Posterior vena cava (tissue), 2 donors: ENCODE measurements at regions of chr4 and their contacts with region 1.

Region 1: GRCh38 chr4:83639849-83640493 is 104.1 kb downstream of the GPAT3 start:
- DNase-seq: no peak

Region 2: DNA sequence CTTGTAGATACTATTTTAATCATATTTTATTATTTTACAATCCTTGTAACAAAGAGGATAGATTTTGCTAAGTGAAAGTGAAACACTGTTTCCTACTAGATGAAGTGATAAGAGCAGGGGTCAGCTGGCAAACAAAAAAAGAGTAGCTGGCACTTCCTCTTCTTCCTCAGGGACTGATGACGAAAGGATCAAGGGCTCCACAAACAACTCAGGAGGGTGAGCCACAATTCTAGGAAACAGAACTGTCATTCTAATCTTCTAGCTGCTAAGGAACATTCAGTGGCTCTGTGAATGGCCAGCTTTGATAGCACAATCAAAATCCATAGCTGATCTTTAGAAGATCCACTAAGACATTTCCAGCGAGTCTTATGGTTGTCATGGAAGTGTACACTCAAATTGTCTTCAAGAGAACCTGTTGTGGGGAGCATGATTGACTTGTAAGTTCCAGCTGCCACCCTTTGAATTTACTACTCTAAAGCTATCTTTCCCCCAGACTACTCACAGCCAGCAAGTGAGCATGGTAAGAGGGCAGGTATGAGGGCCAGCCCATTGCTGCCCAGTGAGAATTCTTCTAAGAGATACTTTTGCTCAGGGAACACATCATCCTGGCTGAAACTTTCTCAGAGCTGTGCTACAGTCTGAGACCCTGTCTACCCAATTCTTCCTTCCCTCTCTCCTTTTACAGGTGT is 1892.6 kb before region 1 on chr4:
- intact Hi-C with region 1: no loop called
- DNase-seq: no peak

Region 3: GRCh38 chr4:83504986-83505385 is 135.0 kb before region 1 on chr4:
- intact Hi-C with region 1: loop called (anchors 5 to 10 kb)
- DNase-seq: no peak

Region 4: GRCh38 chr4:83516042-83516772 is 123.8 kb before region 1 on chr4:
- intact Hi-C with region 1: loop called in 1 of 2 experiments (anchors 10 kb)
- DNase-seq: no peak